ENCODE measurements at regions of chr6 and their contacts with region 1.

Region 1: DNA sequence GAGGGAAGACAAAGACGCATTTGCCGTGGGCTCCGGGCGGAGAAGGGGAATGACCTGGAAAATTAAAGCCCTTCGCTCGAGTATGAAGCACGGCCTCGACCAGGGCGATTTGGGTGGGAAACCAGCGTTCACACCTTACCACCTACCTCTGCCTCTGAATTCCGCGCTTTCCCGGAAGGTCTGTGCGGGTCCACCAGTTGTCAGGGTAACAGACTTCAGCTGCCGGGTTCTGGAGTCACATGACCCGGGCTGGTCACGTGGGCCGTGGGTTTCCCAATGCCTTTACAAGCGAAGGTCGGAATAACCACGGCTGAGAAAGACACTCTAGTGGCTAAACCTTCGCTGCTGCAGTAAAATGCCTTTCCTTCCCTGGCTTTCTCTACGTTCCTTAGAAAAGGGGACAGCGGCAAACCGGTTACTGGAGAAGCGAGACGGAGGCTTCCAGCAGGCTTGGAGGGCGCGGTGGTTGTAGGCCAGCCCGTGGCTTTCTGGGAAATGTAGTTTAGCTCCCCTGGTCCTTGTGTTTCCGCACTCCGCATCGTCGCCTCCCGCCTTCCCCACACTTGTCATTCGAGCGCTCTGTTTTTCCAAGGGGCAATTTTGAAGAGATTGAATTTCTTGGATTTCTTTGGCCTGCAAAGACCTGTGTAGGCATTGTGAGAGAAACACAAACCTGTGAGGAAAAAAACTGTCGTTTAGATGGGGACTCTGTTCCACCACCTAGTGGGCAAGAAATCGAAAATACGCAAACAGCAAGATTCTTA is at the start of gene CEP162:
- DNase-seq: peak; percentile 90
- H3K4me3 ChIP-seq: peak within 1 kb of the TSS; percentile 93
- H3K27ac ChIP-seq: peak within 1 kb of the TSS; percentile 26
- H3K4me1 ChIP-seq: peaks cover 9% of the 10 kb centered on the region
- CTCF ChIP-seq: peak; percentile 89
- total RNA-seq, gene CEP162: 6.3 and 8.9 TPM in 2 replicates

Region 2: DNA sequence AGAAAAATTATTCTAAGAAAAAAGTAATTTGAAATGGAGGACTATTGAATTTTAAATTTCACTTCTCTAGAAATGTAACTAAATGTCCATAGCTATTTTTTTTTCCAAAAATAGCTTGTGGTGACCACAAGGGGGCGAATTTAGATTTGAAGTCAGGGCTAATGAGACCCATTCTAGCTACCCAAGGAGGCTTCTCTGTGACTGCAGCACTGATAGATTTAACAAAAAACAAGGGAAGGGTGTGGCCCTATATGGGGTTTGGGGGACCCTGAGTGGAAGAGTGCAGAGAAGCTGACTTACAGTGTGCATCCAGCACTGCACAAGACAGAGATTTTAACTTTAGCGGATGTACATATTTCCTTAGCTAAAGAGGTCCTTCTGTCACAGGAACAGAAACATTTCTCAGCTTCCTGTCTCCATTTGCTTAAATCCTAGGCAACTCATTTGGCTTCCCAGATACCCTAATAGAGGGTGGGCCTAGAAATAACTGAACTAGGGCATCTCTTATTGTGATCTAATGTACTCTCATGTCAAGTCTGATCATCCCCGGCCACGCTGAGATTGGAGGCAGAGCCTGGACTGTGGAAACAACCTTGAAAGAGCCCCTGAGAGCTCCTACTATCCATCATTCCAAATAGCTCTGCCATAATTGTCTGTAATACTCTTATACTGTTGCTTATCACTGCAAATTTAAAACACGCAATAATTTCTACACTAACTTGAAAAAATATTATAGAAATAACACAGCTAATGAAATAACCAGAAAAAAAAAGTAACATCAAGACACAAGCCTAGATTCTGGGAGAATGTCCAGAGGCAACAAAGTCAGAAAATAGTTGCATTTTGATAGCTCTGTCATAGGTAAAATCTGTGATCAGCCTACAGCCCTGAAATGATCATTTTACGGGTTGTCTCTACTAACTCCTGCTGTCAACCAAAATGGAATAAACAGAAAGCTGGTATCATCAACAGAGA is 612.3 kb before region 1 on chr6:
- CTCF ChIA-PET with region 1: no interaction called
- POLR2A ChIA-PET with region 1: no interaction called
- intact Hi-C with region 1: loop called (anchors 10 kb)
- DNase-seq: peak; percentile 49
- H3K4me3 ChIP-seq: no peak overlapping the region
- H3K27ac ChIP-seq: no peak overlapping the region
- H3K4me1 ChIP-seq: no peaks in the 10 kb centered on the region
- CTCF ChIP-seq: peak; percentile 82

Measured in OCI-LY7 (cell line).